ENCODE measurements at regions of chr11 and their contacts with region 1.

Region 1: DNA sequence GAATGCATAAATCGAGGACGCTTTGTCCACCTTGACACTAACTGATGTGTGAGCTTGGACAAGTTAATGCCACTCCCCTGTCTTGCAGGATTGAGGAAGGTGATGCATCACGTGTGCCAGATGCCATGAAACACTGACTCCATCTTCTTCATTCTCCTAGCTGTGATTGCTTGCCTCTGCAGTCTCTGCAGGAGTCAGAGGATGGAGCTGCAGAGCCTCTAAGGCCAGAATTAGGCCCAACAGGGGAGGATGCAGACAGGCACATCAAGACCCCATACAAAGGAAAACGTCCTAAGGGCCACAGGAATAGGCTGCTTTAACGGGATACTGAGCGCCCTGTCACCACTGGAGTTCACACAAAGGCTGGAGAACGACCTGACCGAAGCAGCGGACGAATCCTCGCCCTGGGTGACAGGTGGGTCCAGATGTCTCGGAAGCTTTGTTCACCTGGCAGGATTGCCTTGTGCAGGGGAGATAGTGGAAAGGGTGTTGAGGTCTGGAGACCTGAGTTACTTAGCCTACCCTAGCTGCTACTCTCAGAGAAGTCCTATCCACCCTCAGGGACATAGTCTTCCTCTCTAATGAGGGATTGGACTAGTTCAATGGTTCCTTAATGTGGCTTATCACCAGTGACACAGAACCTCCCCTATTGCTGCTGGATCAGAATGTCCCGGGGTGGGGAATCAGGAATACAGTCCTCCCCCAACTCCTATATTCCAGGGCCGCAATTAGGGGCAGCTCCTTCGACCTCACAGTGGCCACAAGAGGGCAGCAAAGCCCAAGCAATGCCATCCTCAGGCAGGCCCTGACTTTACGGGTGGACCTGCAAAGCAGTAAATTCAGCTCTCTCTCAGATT is 32.4 kb downstream of the DBX1 start:
- DNase-seq: peak in 3 of 4 donors; percentile 60 to 79 (median 64)
- ATAC-seq: peak; percentile 85
- H3K4me3 ChIP-seq: no peak overlapping the region
- H3K27ac ChIP-seq: no peak overlapping the region
- H3K4me1 ChIP-seq: peaks cover 0 to 6% of the 10 kb centered on the region in 2 donors
- H3K27me3 ChIP-seq: peaks cover 0 to 16% of the 10 kb centered on the region in 2 donors
- CTCF ChIP-seq: peak; percentile 70 to 76

Region 2: GRCh38 chr11:19474954-19475715 is 652.8 kb before region 1 on chr11:
- intact Hi-C with region 1: no loop called
- DNase-seq: no peak
- ATAC-seq: no peak
- H3K4me3 ChIP-seq: no peak overlapping the region
- H3K27ac ChIP-seq: no peak overlapping the region
- H3K4me1 ChIP-seq: no peaks in the 10 kb centered on the region
- H3K27me3 ChIP-seq: no peaks in the 10 kb centered on the region
- CTCF ChIP-seq: no peak

Region 3: DNA sequence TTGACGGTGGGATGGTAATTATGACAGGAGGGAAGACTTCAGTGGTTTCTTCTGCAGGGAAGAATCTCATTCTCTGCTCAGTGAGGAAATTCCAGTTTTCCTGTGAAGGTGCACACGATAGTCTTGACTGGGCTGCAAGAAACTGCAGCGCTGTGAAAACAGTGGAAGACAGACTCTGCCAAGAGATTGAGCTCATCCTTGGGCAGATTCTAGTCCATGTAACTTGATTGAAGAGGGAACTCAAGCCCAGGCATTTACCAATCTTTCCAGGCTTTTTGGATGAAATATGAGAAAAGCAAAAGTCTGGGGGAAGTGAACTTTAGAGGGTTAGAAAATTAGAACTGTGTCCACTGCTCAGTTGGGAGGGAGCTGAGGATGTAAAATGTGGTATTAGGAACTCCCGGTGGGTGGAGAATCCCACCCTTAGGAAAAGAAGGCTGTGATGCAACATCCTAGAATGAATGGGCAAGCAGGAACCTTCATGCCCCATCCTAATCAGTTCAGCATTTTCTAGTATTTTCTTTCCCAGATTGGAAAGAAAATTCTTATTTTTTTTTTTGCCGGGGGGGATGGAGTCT is 180.3 kb before region 1 on chr11:
- intact Hi-C with region 1: loop called in 1 of 2 experiments (anchors 5 kb)
- DNase-seq: no peak
- ATAC-seq: no peak
- H3K4me3 ChIP-seq: no peak overlapping the region
- H3K27ac ChIP-seq: no peak overlapping the region
- H3K4me1 ChIP-seq: peaks cover 0 to 6% of the 10 kb centered on the region in 2 donors
- H3K27me3 ChIP-seq: no peaks in the 10 kb centered on the region
- CTCF ChIP-seq: no peak

Region 4: GRCh38 chr11:20050551-20051333 is 77.2 kb before region 1 on chr11:
- intact Hi-C with region 1: no loop called
- DNase-seq: peak in 1 of 4 donors; percentile 32
- ATAC-seq: peak; percentile 73
- H3K4me3 ChIP-seq: no peak overlapping the region
- H3K27ac ChIP-seq: peak overlapping the region in 1 of 2 donors; percentile 7
- H3K4me1 ChIP-seq: no peaks in the 10 kb centered on the region
- H3K27me3 ChIP-seq: no peaks in the 10 kb centered on the region
- CTCF ChIP-seq: no peak

Region 5: DNA sequence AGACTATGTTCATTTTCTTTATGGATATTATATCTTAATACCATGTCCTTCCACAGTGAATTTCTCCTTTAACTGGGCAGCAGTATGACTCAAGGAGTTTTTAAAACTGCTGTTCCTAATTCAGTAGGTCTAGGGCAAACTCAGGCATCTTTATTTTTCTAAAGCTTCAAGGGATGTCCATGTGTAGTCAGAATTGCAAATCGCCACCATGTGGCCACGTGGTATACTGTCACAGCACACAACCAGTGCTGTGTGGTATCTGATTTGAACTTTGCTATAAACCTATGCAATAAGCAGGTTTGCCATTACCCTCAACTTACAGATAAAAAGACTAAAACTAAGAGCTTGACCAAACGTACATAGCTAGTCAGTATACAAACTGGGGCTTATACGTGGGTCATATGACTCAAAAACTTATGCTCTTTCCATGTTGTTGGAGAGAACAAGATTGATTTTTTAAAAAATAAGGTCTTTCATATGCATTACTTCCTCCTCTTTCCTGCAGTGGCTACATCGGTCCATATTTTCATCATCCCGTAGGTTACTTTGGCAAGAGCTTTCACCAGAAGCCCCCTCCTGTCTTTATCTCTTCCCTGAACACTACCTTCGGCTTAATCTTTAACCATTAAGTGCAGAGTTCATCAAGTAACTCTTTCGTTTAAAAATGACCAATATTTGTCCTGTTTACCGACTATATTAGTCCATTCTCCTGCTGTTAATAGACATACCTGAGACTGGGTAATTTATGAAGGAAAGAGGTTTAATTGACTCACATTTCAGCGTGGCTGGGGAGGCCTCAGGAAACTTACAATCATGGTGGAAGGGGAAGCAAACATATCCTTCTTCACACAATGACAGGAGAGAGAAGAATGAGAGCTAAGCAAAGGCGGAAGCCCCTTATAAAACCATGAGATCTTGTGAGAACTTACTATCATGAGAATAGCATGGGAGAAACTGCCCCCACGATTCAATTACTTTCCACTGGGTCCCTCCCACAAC is 227.6 kb after region 1 on chr11:
- intact Hi-C with region 1: loop called in 1 of 2 experiments (anchors 5 kb)
- DNase-seq: peak in 1 of 4 donors; percentile 16
- ATAC-seq: peak; percentile 84
- H3K4me3 ChIP-seq: no peak overlapping the region
- H3K27ac ChIP-seq: no peak overlapping the region
- H3K4me1 ChIP-seq: no peaks in the 10 kb centered on the region
- H3K27me3 ChIP-seq: peaks cover 0 to 10% of the 10 kb centered on the region in 2 donors
- CTCF ChIP-seq: peak; percentile 42 to 56